Activated CD4-positive, alpha-beta T cell treated with anti-CD3 and anti-CD28 coated beads for 36 hours (primary cell): ENCODE measurements at regions of chr2 and their contacts with region 1.

Region 1: DNA sequence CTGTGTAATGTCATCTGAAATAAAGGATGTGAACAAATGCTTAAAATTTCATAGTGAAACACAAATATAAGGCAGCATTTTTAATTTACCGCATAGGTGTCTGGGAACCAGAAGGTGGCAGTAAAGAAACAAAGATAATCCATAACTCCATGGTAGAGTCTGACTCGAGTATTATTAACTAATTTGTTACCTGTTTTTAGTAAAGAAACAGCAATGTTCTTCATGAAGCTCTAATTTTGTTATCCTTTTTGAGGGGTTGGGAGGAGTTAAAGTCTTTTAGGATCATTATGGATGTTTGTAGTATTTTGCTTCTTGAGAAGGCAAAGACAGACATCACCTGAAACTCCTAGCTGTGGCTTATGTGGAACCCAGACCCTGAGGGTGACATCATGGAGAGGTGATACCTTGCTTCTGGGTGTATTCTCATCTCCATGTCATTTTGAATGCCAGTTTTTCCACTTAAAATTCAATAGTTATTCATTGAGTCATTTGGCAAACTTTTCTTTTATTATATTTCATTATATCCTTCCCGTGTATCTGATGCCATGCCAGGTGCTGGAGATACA is 286.2 kb upstream of the EPAS1 start:
- DNase-seq: no peak
- ATAC-seq: peak; percentile 74
- H3K4me3 Mint-ChIP-seq: no peak overlapping the region
- H3K27ac Mint-ChIP-seq: no peak overlapping the region
- H3K4me1 Mint-ChIP-seq: no peaks in the 10 kb centered on the region
- H3K27me3 Mint-ChIP-seq: no peaks in the 10 kb centered on the region

Region 2: GRCh38 chr2:45009303-45009927 is 1001.6 kb before region 1 on chr2 and contains the start of gene SIX2:
- CTCF ChIA-PET with region 1: no interaction called
- POLR2A ChIA-PET with region 1: no interaction called
- intact Hi-C with region 1: no loop called
- DNase-seq: peak; percentile 38
- ATAC-seq: peak; percentile 16
- H3K4me3 Mint-ChIP-seq: peak within 1 kb of the TSS; percentile 53
- H3K27ac Mint-ChIP-seq: no peak within 1 kb of the TSS
- H3K4me1 Mint-ChIP-seq: peaks cover 21% of the 10 kb centered on the region
- H3K27me3 Mint-ChIP-seq: peaks cover 67% of the 10 kb centered on the region
- total RNA-seq, gene SIX2: not detected

Region 3: DNA sequence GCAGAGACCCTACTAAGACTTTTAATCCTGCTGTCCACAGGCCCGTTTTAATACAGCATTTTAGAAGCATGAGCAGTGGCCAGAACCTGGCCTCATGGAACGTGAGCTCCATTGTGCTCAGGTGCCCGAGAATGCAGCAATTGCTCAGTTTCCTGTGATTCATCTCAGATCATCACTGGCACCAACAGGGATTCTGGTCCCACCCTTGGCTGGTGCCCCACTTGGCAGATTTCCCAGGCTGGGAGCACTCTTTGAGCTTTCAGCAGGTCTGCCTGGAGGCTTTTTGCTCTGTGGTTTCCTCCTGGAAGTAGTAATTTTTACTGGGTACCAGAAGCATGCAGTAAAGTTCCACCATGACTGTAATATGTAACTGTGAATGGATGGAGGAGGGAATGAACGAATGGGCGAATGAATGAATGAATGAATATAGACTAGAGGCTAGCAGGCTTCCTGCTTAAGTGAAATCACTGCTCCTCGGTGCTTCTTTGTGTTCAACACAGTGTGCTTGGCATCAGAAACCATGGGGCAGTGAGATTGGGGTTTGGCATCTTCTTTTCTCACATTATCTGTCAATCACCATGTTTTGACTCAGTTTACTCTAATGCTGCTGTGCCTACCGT is 46.7 kb before region 1 on chr2:
- CTCF ChIA-PET with region 1: no interaction called
- POLR2A ChIA-PET with region 1: no interaction called
- intact Hi-C with region 1: no loop called
- DNase-seq: peak; percentile 43
- ATAC-seq: peak; percentile 44
- H3K4me3 Mint-ChIP-seq: no peak overlapping the region
- H3K27ac Mint-ChIP-seq: no peak overlapping the region
- H3K4me1 Mint-ChIP-seq: peaks cover 14% of the 10 kb centered on the region
- H3K27me3 Mint-ChIP-seq: no peaks in the 10 kb centered on the region

Region 4: DNA sequence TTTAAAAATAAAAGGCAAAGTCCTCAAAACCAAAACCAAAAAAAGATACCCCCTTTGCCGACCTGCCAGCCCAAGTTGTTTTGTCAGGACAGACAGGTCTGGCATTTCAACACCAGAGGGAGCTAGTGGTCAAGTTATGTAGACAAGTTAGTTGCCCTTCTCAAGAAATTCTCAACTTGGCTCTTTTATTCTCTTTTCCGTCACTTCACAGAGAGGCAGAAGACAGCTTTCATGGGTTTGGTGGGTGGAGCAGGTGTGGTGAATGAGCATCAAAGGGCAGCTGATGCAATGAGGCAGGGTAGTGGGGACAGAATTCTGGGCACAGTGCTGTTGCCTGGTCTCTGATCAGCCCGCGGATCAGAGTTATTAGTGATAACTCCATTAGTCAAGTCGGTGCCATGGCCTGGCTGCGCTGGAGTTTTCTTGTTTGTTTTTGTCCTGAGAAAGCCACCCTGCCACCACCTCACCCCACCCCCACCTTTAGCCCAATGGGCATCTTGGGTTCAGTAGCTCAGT is 17.5 kb before region 1 on chr2:
- CTCF ChIA-PET with region 1: interaction called, 11 read pairs
- POLR2A ChIA-PET with region 1: no interaction called
- intact Hi-C with region 1: no loop called
- DNase-seq: peak; percentile 76
- ATAC-seq: peak; percentile 85
- H3K4me3 Mint-ChIP-seq: no peak overlapping the region
- H3K27ac Mint-ChIP-seq: no peak overlapping the region
- H3K4me1 Mint-ChIP-seq: peaks cover 8% of the 10 kb centered on the region
- H3K27me3 Mint-ChIP-seq: no peaks in the 10 kb centered on the region

Region 5: GRCh38 chr2:46062637-46063412 is 51.8 kb after region 1 on chr2:
- CTCF ChIA-PET with region 1: interaction called, 12 read pairs
- POLR2A ChIA-PET with region 1: no interaction called
- intact Hi-C with region 1: loop called in 1 of 2 experiments (anchors 5 kb)
- DNase-seq: peak; percentile 85
- ATAC-seq: peak; percentile 52
- H3K4me3 Mint-ChIP-seq: no peak overlapping the region
- H3K27ac Mint-ChIP-seq: no peak overlapping the region
- H3K4me1 Mint-ChIP-seq: peaks cover 17% of the 10 kb centered on the region
- H3K27me3 Mint-ChIP-seq: no peaks in the 10 kb centered on the region

Region 6: DNA sequence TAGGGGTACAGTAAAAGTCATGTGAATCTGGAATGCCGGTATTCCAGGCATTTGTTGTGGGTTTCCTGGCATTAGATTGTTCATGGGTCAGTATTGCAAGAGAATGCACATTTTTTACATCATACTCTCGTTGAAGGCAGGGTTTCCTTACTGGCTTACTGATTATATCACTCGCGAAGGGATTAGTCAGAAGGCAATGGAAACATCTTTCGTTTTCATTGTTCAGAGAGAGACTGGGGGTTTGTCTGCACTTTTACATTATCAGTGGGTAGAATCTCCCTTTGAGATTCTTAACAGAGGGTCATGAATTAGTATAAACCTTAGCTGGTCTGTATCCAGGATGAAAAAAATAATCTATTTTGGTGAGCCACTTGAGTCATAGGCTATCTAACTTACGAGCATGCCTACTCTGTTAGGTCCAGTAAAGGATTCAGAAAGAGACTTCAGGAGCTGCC is 56.9 kb after region 1 on chr2:
- CTCF ChIA-PET with region 1: interaction called, 12 read pairs
- POLR2A ChIA-PET with region 1: no interaction called
- intact Hi-C with region 1: loop called in 1 of 2 experiments (anchors 5 kb)
- DNase-seq: no peak
- ATAC-seq: peak; percentile 86
- H3K4me3 Mint-ChIP-seq: no peak overlapping the region
- H3K27ac Mint-ChIP-seq: peak overlapping the region; percentile 48
- H3K4me1 Mint-ChIP-seq: peaks cover 25% of the 10 kb centered on the region
- H3K27me3 Mint-ChIP-seq: no peaks in the 10 kb centered on the region

Region 7: GRCh38 chr2:46461011-46461674 is 450.1 kb after region 1 on chr2:
- CTCF ChIA-PET with region 1: interaction called, 4 read pairs
- POLR2A ChIA-PET with region 1: no interaction called
- intact Hi-C with region 1: loop called (anchors 1 kb)
- DNase-seq: peak; percentile 83
- ATAC-seq: peak; percentile 58
- H3K4me3 Mint-ChIP-seq: no peak overlapping the region
- H3K27ac Mint-ChIP-seq: peak overlapping the region; percentile 0
- H3K4me1 Mint-ChIP-seq: peaks cover 2% of the 10 kb centered on the region
- H3K27me3 Mint-ChIP-seq: peaks cover 2% of the 10 kb centered on the region

Region 8: GRCh38 chr2:46887028-46887885 is 876.2 kb after region 1 on chr2:
- CTCF ChIA-PET with region 1: no interaction called
- POLR2A ChIA-PET with region 1: no interaction called
- intact Hi-C with region 1: loop called in 1 of 2 experiments (anchors 5 kb)
- DNase-seq: no peak
- ATAC-seq: peak; percentile 27
- H3K4me3 Mint-ChIP-seq: no peak overlapping the region
- H3K27ac Mint-ChIP-seq: peak overlapping the region; percentile 15
- H3K4me1 Mint-ChIP-seq: peaks cover 12% of the 10 kb centered on the region
- H3K27me3 Mint-ChIP-seq: peaks cover 5% of the 10 kb centered on the region